Pancreas (tissue), 10 donors: ENCODE measurements at regions of chr4 and their contacts with region 1.

Region 1: GRCh38 chr4:102449751-102450352 is 51.3 kb upstream of the NFKB1 start:
- DNase-seq: peak in 3 of 6 donors; percentile 13 to 48 (median 41)
- ATAC-seq: peak; percentile 64 to 89 (median 85)
- H3K4me3 ChIP-seq: no peak overlapping the region
- H3K27ac ChIP-seq: no peak overlapping the region
- H3K4me1 ChIP-seq: no peaks in the 10 kb centered on the region
- H3K27me3 ChIP-seq: no peaks in the 10 kb centered on the region
- CTCF ChIP-seq: peak; percentile 8 to 42 (median 38)

Region 2: GRCh38 chr4:102518703-102519131 is 68.9 kb after region 1 on chr4:
- intact Hi-C with region 1: no loop called
- DNase-seq: no peak
- ATAC-seq: peak in 3 of 4 donors; percentile 36 to 70 (median 56)
- H3K4me3 ChIP-seq: no peak overlapping the region
- H3K27ac ChIP-seq: no peak overlapping the region
- H3K4me1 ChIP-seq: peaks cover 0 to 35% (median 11%) of the 10 kb centered on the region in 3 donors
- H3K27me3 ChIP-seq: no peaks in the 10 kb centered on the region
- CTCF ChIP-seq: no peak

Region 3: GRCh38 chr4:102610007-102610406 is 160.2 kb after region 1 on chr4:
- intact Hi-C with region 1: loop called in 1 of 3 experiments (anchors 10 kb)
- DNase-seq: no peak
- ATAC-seq: no peak
- H3K4me3 ChIP-seq: no peak overlapping the region
- H3K27ac ChIP-seq: no peak overlapping the region
- H3K4me1 ChIP-seq: no peaks in the 10 kb centered on the region
- H3K27me3 ChIP-seq: no peaks in the 10 kb centered on the region
- CTCF ChIP-seq: no peak

Region 4: DNA sequence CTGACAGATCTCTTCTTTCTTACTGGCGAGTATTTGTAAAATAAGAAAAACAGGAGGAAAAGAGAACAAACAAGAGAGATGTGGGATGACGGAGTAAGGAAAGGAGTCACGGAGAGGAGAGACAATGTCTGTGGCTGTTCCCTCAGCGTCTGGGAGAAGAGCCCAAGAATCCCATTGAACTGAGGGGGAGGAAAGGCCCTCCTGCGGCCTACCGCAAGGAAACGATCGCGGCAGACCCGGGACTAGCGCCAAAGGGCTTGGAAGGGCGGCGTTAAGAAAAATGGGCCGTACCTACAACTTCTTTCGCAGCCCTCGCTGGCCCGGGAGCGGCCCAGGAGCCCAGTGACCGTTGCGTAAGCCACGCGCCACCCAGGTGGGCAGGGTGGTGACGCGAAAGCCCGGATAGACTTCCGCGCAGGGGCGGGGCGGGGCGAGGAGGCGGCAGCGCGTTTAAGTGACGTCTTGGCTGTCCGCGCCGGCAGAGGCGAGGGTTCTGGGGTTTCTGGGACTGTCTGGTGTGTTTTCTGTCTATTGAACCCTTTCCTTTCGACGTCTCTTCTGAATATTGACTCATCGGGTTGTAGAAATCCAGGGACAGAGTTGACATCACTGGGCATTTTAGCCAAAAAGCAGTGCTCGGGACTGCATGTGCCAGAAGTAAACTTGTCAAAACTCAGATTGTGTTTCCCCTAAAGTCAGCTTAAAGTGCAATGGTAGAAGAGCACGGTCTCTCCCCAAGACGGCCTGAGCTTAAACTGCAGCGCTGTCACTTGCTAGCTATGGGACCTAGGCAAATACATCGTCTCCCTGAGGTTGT is 569.7 kb after region 1 on chr4 and contains the start of gene SLC9B1:
- intact Hi-C with region 1: loop called in 1 of 3 experiments (anchors 10 kb)
- DNase-seq: peak; percentile 97 to 98 (median 98)
- ATAC-seq: peak; percentile 99 to 100 (median 100)
- H3K4me3 ChIP-seq: peak within 1 kb of the TSS; percentile 21 to 40 (median 34)
- H3K27ac ChIP-seq: peak within 1 kb of the TSS; percentile 86 to 93 (median 88)
- H3K4me1 ChIP-seq: peaks cover 0 to 6% (median 0%) of the 10 kb centered on the region in 3 donors
- H3K27me3 ChIP-seq: no peaks in the 10 kb centered on the region
- CTCF ChIP-seq: no peak
- total RNA-seq, gene SLC9B1: 0.28 to 1.0 (median 0.49) TPM

Region 5: GRCh38 chr4:103099691-103100392 is 650.0 kb after region 1 on chr4 and contains the start of gene BDH2:
- intact Hi-C with region 1: loop called in 2 of 3 experiments (anchors 10 kb)
- DNase-seq: peak in 3 of 6 donors; percentile 56 to 70 (median 57)
- ATAC-seq: peak; percentile 96 to 99 (median 98)
- H3K4me3 ChIP-seq: peak within 1 kb of the TSS; percentile 4 to 44 (median 32)
- H3K27ac ChIP-seq: peak within 1 kb of the TSS in 3 of 4 donors; percentile 11 to 62 (median 51)
- H3K4me1 ChIP-seq: peaks cover 5 to 19% (median 7%) of the 10 kb centered on the region in 3 donors
- H3K27me3 ChIP-seq: no peaks in the 10 kb centered on the region
- CTCF ChIP-seq: peak; percentile 56 to 69 (median 60)
- total RNA-seq, gene BDH2: 8.6 to 24.1 (median 14.8) TPM